ENCODE measurements at regions of chr4 and their contacts with region 1.

Region 1: GRCh38 chr4:100034023-100034664 is 84.1 kb upstream of the H2AZ1 start:
- DNase-seq: no peak
- H3K4me3 ChIP-seq: no peak overlapping the region
- H3K4me3 Mint-ChIP-seq: no peak overlapping the region
- H3K27ac ChIP-seq: no peak overlapping the region
- H3K27ac Mint-ChIP-seq: no peak overlapping the region
- H3K4me1 ChIP-seq: no peaks in the 10 kb centered on the region
- H3K4me1 Mint-ChIP-seq: no peaks in the 10 kb centered on the region
- H3K27me3 ChIP-seq: no peaks in the 10 kb centered on the region
- H3K27me3 Mint-ChIP-seq: peaks cover 3 to 4% of the 10 kb centered on the region in 2 donors

Region 2: DNA sequence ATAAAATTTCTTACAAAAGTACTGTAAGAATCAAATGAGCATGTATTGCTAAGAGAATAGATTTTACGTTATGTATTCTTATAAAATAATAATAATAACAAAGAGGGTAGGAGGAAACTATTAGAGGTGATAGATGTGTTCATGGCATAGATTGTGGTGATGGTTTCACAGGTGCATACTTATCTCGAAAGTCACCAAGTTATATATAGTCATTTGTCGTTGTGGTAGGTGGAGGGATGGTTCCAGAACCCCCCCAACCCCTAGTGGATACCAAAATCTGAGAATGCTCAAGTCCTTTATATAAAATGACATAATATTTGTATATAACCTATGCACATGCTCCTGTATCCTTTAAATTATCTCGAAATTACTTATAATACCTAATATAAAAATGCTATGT is 47.4 kb before region 1 on chr4:
- CTCF ChIA-PET with region 1: no interaction called
- POLR2A ChIA-PET with region 1: no interaction called
- intact Hi-C with region 1: no loop called
- DNase-seq: no peak
- H3K4me3 ChIP-seq: no peak overlapping the region
- H3K4me3 Mint-ChIP-seq: no peak overlapping the region
- H3K27ac ChIP-seq: no peak overlapping the region
- H3K27ac Mint-ChIP-seq: no peak overlapping the region
- H3K4me1 ChIP-seq: no peaks in the 10 kb centered on the region
- H3K4me1 Mint-ChIP-seq: no peaks in the 10 kb centered on the region
- H3K27me3 ChIP-seq: no peaks in the 10 kb centered on the region
- H3K27me3 Mint-ChIP-seq: peaks cover 6 to 11% of the 10 kb centered on the region in 2 donors

Region 3: GRCh38 chr4:100539706-100540105 is 505.6 kb after region 1 on chr4:
- CTCF ChIA-PET with region 1: no interaction called
- POLR2A ChIA-PET with region 1: no interaction called
- intact Hi-C with region 1: no loop called
- DNase-seq: peak in 2 of 5 donors; percentile 9 to 38
- H3K4me3 ChIP-seq: no peak overlapping the region
- H3K4me3 Mint-ChIP-seq: no peak overlapping the region
- H3K27ac ChIP-seq: no peak overlapping the region
- H3K27ac Mint-ChIP-seq: no peak overlapping the region
- H3K4me1 ChIP-seq: peaks cover 8% of the 10 kb centered on the region
- H3K4me1 Mint-ChIP-seq: peaks cover 0 to 7% (median 2%) of the 10 kb centered on the region in 4 donors
- H3K27me3 ChIP-seq: no peaks in the 10 kb centered on the region
- H3K27me3 Mint-ChIP-seq: peaks cover 0 to 7% of the 10 kb centered on the region in 2 donors

Region 4: GRCh38 chr4:100778431-100778830 is 744.3 kb after region 1 on chr4:
- CTCF ChIA-PET with region 1: no interaction called
- POLR2A ChIA-PET with region 1: no interaction called
- intact Hi-C with region 1: loop called (anchors 5 kb)
- DNase-seq: no peak
- H3K4me3 ChIP-seq: no peak overlapping the region
- H3K4me3 Mint-ChIP-seq: no peak overlapping the region
- H3K27ac ChIP-seq: no peak overlapping the region
- H3K27ac Mint-ChIP-seq: no peak overlapping the region
- H3K4me1 ChIP-seq: no peaks in the 10 kb centered on the region
- H3K4me1 Mint-ChIP-seq: no peaks in the 10 kb centered on the region
- H3K27me3 ChIP-seq: no peaks in the 10 kb centered on the region
- H3K27me3 Mint-ChIP-seq: no peaks in the 10 kb centered on the region

Measured in CD4-positive, alpha-beta memory T cell (primary cell).